Vagina (tissue), 2 donors: ENCODE measurements at regions of chr10 and their contacts with region 1.

Region 1: GRCh38 chr10:4813023-4813422 is 13.0 kb upstream of the AKR1E2 start:
- DNase-seq: no peak
- H3K4me3 ChIP-seq: no peak overlapping the region
- H3K27ac ChIP-seq: no peak overlapping the region
- H3K4me1 ChIP-seq: peaks cover 5% of the 10 kb centered on the region
- H3K27me3 ChIP-seq: no peaks in the 10 kb centered on the region
- CTCF ChIP-seq: no peak
- POLR2A ChIP-seq: no peak

Region 2: DNA sequence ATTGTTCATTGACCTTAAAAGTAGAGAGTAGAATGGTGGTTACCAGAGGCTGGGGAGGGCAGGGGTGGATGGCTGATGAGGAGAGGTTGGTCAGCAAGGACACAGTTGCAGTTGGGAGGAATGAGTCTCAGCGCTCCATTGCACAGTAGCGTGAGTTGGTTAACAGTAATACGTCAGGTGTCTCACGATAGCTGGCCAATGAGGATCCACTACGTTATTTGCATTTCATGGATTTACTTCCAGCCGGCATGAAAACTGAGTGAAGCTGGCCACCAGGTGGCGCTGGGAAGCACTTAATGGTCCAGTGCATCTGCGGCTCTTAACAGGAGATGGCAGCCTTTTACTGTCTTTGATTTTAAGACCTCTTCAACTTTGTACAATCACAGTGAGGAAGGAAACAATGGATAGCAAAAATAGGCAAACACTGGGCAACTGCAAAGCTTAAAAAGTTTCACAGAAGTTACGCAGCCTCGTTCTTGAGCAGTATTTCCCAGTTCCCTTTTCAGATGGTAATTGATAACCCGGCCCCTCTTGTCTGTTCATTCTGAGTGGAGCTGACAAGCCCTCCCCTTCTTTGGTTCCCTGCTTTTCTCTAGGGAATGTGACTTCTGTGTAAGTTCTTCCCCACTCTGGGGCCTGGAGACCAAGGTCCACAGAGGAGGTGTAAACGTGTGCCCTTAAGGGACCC is 36.7 kb after region 1 on chr10:
- intact Hi-C with region 1: no loop called
- DNase-seq: peak in 1 of 2 donors; percentile 92
- H3K4me3 ChIP-seq: no peak overlapping the region
- H3K27ac ChIP-seq: peak overlapping the region; percentile 38
- H3K4me1 ChIP-seq: peaks cover 21% of the 10 kb centered on the region
- H3K27me3 ChIP-seq: no peaks in the 10 kb centered on the region
- CTCF ChIP-seq: peak; percentile 99 to 100 (median 99)
- POLR2A ChIP-seq: no peak

Region 3: DNA sequence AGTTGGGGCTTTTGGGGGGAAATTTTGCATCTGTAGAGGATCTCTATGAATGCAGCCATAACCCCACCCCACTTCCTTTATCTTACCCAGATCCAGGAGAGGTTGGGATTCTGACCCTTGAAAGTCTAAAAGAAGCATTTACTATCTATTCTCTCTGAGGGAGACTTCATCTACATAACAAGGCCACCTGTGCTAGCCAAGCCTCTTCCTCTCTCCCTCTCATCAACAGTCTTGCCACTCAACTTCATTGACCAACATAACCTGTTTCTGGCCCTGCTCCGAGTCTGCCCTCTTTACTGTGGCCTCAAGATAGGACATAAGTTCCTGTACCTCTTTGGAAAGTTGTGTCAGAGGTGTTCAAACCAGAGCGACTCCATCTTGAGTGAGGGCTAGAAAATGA is 572.2 kb after region 1 on chr10:
- intact Hi-C with region 1: loop called (anchors 10 kb)
- DNase-seq: no peak
- H3K4me3 ChIP-seq: no peak overlapping the region
- H3K27ac ChIP-seq: no peak overlapping the region
- H3K4me1 ChIP-seq: no peaks in the 10 kb centered on the region
- H3K27me3 ChIP-seq: no peaks in the 10 kb centered on the region
- CTCF ChIP-seq: no peak
- POLR2A ChIP-seq: no peak